MCF 10A (cell line): ENCODE measurements at regions of chr5 and their contacts with region 1.

Region 1: GRCh38 chr5:54844905-54845566 is 140.4 kb downstream of the ESM1 start:
- DNase-seq: peak; percentile 47
- H3K4me3 Mint-ChIP-seq: no peak overlapping the region
- H3K27ac Mint-ChIP-seq: no peak overlapping the region
- H3K4me1 Mint-ChIP-seq: no peaks in the 10 kb centered on the region
- H3K27me3 Mint-ChIP-seq: no peaks in the 10 kb centered on the region
- CTCF ChIP-seq: peak; percentile 47

Region 2: DNA sequence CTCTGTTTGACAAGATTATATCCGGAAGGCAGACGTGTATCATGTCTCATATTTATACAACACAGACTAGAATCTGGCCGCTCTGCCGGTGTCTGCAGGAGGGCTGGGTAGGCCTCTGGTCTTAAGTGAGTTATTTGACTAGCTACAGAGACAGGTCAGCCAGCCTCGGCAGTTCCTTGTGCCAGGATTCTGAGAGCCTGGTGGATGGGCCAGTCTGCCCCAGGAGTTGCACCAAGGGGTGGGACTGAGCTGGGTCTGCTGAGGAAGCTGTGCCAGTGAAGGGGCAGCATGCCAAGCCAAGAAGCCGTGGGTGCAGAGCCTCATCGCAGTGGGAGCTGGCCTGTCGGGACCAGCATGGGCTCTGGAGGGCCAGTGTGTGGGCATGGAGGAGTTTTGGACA is 320.3 kb before region 1 on chr5:
- CTCF ChIA-PET with region 1: interaction called, 101 read pairs
- POLR2A ChIA-PET with region 1: interaction called, 4 read pairs
- intact Hi-C with region 1: no loop called
- DNase-seq: no peak
- H3K4me3 Mint-ChIP-seq: no peak overlapping the region
- H3K27ac Mint-ChIP-seq: no peak overlapping the region
- H3K4me1 Mint-ChIP-seq: peaks cover 18% of the 10 kb centered on the region
- H3K27me3 Mint-ChIP-seq: no peaks in the 10 kb centered on the region
- CTCF ChIP-seq: no peak

Region 3: DNA sequence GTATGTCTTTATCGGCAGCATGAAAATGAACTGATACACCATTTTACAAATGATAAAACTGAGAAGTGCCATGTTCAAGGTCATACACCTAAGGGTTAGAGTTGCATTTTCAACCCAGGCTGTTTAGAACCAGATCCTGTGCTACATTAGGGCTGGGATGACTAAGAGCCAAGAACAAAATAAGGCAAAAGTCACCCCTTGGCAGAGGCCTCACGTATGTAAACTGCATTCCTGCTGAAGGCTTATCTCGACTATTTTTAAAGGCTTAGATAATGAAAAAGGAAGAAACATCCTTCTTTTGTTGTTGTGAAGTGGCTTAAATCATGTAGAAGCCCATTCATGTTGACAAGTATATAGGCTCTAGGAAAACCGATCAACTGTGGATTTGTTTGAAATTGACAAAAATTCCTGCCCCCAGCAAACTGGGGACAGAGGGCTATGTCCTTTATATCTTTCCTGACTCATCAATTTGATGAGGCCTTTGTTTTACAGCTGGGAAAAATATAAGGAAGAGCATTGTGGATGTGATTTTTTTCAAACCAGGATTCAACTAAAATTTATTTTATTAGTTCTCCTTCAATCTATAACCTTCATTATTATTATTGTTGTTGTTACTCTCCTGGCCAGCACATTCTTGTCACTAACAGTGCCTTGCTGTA is 131.0 kb before region 1 on chr5:
- CTCF ChIA-PET with region 1: no interaction called
- POLR2A ChIA-PET with region 1: no interaction called
- intact Hi-C with region 1: no loop called
- DNase-seq: no peak
- H3K4me3 Mint-ChIP-seq: no peak overlapping the region
- H3K27ac Mint-ChIP-seq: no peak overlapping the region
- H3K4me1 Mint-ChIP-seq: no peaks in the 10 kb centered on the region
- H3K27me3 Mint-ChIP-seq: peaks cover 11% of the 10 kb centered on the region
- CTCF ChIP-seq: no peak

Region 4: DNA sequence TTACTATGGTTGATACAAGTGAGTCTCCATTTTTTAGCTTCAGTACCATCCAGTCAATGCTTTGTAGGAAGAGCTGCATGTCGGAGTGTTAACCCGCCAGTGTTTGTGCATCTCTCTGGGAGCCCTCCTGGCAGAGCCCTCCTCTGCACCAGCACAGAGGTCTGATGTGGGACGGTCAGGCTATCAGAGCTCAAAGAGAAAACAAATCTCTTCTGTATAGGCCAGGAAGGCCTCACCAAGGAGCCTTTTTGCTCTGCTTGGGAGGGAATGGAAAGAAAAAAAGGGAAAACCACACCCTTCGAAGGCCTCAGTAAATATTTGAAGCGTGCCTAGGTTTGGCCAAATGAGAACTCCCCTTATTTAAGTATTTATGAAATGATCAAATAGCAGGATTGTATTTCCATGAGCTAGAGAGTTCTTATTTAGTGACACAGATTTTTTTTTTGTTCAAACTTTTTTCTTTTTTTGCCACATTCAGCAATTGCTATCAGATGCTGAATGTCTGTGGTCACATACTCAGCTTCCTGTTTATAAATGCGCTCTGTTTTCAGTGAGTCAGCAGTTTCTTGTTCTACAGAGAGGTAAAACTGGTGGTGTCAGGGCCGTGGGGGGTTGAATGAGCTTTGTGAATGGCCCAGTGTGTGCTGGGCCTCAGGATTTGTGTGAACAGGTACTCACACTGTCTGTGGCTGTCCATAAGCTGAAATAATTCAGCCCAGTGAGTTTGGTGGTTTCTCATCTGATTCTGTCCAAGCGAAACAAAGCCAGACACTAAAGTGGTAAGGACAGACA is 100.8 kb before region 1 on chr5:
- CTCF ChIA-PET with region 1: interaction called, 13 read pairs
- POLR2A ChIA-PET with region 1: no interaction called
- intact Hi-C with region 1: loop called (anchors 10 kb)
- DNase-seq: peak; percentile 78
- H3K4me3 Mint-ChIP-seq: no peak overlapping the region
- H3K27ac Mint-ChIP-seq: peak overlapping the region; percentile 74
- H3K4me1 Mint-ChIP-seq: peaks cover 6% of the 10 kb centered on the region
- H3K27me3 Mint-ChIP-seq: no peaks in the 10 kb centered on the region
- CTCF ChIP-seq: no peak

Region 5: GRCh38 chr5:54832858-54833257 is 12.2 kb before region 1 on chr5:
- CTCF ChIA-PET with region 1: interaction called, 28 read pairs
- POLR2A ChIA-PET with region 1: no interaction called
- intact Hi-C with region 1: no loop called
- DNase-seq: no peak
- H3K4me3 Mint-ChIP-seq: no peak overlapping the region
- H3K27ac Mint-ChIP-seq: no peak overlapping the region
- H3K4me1 Mint-ChIP-seq: peaks cover 9% of the 10 kb centered on the region
- H3K27me3 Mint-ChIP-seq: no peaks in the 10 kb centered on the region
- CTCF ChIP-seq: no peak

Region 6: GRCh38 chr5:54874373-54874921 is 29.4 kb after region 1 on chr5:
- CTCF ChIA-PET with region 1: interaction called, 13 read pairs
- POLR2A ChIA-PET with region 1: no interaction called
- intact Hi-C with region 1: no loop called
- DNase-seq: peak; percentile 80
- H3K4me3 Mint-ChIP-seq: peak overlapping the region; percentile 61
- H3K27ac Mint-ChIP-seq: peak overlapping the region; percentile 83
- H3K4me1 Mint-ChIP-seq: peaks cover 28% of the 10 kb centered on the region
- H3K27me3 Mint-ChIP-seq: no peaks in the 10 kb centered on the region
- CTCF ChIP-seq: no peak

Region 7: GRCh38 chr5:55159763-55160492 is 314.9 kb after region 1 on chr5 and contains the start of gene GPX8:
- CTCF ChIA-PET with region 1: interaction called, 11 read pairs
- POLR2A ChIA-PET with region 1: interaction called, 3 read pairs
- intact Hi-C with region 1: no loop called
- DNase-seq: peak; percentile 88
- H3K4me3 Mint-ChIP-seq: peak within 1 kb of the TSS; percentile 78
- H3K27ac Mint-ChIP-seq: peak within 1 kb of the TSS; percentile 82
- H3K4me1 Mint-ChIP-seq: peaks cover 2% of the 10 kb centered on the region
- H3K27me3 Mint-ChIP-seq: peaks cover 13% of the 10 kb centered on the region
- CTCF ChIP-seq: peak; percentile 66
- total RNA-seq, gene GPX8: 37.2 and 38.8 TPM in 2 replicates